Activated CD8-positive, alpha-beta memory T cell treated with anti-CD3 and anti-CD28 coated beads, Interleukin-2, amount 10 ng/mL, durations not matched to agents 7 days and 5 days (primary cell): ENCODE measurements at regions of chr5 and their contacts with region 1.

Region 1: DNA sequence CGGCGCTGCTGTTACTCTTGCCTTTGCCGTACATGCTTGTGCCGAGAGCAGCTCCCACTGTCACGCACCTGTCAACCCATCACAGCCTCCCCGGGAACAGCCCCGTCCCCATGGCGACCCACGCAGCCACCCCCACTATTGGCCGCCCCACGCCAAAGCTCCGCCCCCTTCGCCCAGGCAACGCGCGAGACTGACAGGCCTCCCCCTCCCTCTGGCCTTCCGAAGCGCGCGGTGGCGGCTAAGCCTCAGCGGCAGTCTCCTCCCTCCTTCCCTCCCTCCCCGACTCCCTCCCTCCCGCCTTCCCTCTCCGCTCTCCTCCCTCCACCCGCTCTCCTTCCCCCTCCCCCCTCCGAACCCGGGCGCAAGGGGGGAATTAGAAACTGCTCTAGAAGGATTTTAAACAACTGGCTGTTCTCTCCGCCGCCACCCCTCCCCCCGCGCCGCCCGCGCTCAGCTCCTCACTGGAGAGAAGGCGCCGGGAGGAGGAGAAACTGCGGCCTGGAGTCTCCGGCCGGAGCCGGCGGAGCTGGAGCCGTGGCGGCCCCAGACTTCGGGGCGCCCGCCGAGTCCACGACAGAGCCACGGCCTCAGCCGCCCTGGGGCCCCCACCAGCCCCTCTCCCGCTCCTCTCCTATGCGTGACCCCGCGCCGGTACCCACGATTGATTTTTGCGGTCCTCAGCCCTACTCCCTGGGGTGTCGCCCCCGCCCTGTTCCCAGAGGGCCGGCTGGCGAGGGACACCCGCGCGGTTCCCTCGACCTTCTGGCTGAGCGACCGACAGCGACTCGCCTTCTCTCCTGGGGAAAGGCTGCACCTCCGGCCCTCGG is at the start of gene SSBP2:
- DNase-seq: peak; percentile 98
- ATAC-seq: peak; percentile 89
- H3K4me3 Mint-ChIP-seq: peak within 1 kb of the TSS; percentile 88
- H3K27ac Mint-ChIP-seq: peak within 1 kb of the TSS; percentile 84
- H3K4me1 Mint-ChIP-seq: peaks cover 22% of the 10 kb centered on the region
- H3K27me3 Mint-ChIP-seq: peaks cover 30% of the 10 kb centered on the region
- total RNA-seq, gene SSBP2: 13.1 to 21.5 TPM

Region 2: GRCh38 chr5:81761270-81761669 is 10.0 kb after region 1 on chr5:
- CTCF ChIA-PET with region 1: no interaction called
- DNase-seq: no peak
- ATAC-seq: no peak
- H3K4me3 Mint-ChIP-seq: no peak overlapping the region
- H3K27ac Mint-ChIP-seq: no peak overlapping the region
- H3K4me1 Mint-ChIP-seq: peaks cover 11% of the 10 kb centered on the region
- H3K27me3 Mint-ChIP-seq: peaks cover 9% of the 10 kb centered on the region

Region 3: DNA sequence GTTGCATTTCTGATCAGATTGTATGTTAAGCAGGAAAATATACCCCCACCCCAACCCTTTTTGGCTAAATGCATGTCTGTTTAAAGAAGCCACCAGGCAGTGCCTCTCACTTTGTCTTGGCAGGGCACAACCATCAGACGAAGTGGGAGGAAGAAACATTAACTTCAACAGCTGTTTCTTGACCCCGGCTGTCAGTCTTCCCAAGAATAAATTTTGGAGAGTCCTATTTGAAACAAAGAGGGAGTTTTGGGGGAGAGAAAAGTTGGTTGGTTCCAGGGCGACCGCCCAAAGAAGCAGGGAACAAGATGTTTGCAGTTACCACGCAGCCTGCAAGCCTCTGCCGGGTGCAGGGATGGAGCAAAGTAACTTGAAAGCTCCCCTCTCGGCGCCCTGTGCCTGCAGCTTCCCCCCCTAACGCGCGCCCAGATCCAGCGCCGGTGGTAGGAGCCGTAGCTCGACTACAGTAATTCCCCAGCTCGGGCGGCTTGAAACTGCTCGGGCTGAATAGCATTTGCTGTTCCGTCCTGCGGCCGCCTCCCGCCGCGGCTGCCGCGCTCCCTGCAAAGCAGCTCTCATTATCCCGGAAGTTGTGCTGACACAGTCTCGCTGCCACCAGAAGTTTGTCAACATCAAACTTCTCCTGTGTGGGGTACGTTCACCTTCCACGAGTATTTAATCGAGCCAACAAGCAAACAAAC is 100.4 kb after region 1 on chr5:
- CTCF ChIA-PET with region 1: interaction called, 24 read pairs
- DNase-seq: peak; percentile 93
- ATAC-seq: peak; percentile 97
- H3K4me3 Mint-ChIP-seq: peak overlapping the region; percentile 80
- H3K27ac Mint-ChIP-seq: peak overlapping the region; percentile 93
- H3K4me1 Mint-ChIP-seq: peaks cover 24% of the 10 kb centered on the region
- H3K27me3 Mint-ChIP-seq: peaks cover 3% of the 10 kb centered on the region

Region 4: DNA sequence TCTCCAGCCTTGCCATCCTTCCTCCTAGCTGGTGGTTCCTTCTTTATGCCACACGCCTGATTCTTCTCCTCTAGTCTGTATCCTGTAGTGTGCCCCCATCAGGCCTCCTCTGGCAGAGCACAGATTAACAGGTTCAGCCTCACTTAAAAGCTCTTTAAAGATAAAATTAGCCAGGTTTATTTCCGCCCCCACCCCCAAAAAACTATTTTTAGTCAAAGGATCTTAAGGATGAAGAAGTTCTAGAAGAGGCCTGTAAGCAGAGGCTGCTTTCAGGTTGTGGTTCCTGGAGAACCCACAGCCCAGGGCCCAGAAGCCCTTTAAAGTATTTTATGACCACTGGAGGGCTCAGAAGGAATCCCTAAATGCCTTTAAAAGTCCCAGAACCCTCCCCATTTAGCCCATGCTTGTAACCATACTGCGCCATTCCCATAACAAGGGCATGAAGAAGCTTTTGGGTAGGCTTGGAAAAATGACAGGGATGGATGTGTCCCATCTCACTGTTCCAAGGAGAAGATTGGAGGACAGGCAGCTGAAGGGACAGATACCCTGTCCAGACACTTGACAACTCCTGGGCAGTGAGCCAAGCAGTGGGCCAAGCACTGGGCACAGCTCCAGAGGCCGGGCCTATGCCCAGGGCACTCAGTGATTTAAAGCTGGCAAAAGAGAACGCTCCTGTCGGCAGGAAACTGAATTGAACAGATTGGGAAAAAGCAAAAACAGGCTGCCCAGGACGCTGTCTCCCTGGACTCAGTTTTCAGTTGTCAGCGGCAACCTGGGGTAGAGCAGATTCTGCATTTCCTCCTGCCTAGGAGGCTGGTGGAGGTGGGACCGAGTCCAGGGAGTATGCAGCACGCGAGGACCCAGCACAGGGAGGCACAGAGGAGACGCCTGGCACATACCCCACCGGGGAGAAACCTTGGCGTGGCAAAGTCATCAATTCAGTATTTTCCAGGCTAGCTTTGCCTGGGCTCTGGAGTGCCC is 106.0 kb after region 1 on chr5:
- CTCF ChIA-PET with region 1: interaction called, 24 read pairs
- DNase-seq: no peak
- ATAC-seq: no peak
- H3K4me3 Mint-ChIP-seq: no peak overlapping the region
- H3K27ac Mint-ChIP-seq: no peak overlapping the region
- H3K4me1 Mint-ChIP-seq: peaks cover 8% of the 10 kb centered on the region
- H3K27me3 Mint-ChIP-seq: no peaks in the 10 kb centered on the region